Colonic mucosa (tissue), 4 donors: ENCODE measurements at regions of chr19 and their contacts with region 1.

Region 1: GRCh38 chr19:34336781-34337271 is 28.2 kb upstream of the GPI start:
- DNase-seq: no peak
- H3K4me3 ChIP-seq: no peak overlapping the region
- H3K27ac ChIP-seq: no peak overlapping the region
- H3K4me1 ChIP-seq: no peaks in the 10 kb centered on the region
- H3K27me3 ChIP-seq: no peaks in the 10 kb centered on the region
- CTCF ChIP-seq: peak; percentile 60

Region 2: GRCh38 chr19:34236035-34236987 is 100.5 kb before region 1 on chr19:
- intact Hi-C with region 1: loop called (anchors 5 kb)
- DNase-seq: peak; percentile 68
- H3K4me3 ChIP-seq: no peak overlapping the region
- H3K27ac ChIP-seq: peak overlapping the region; percentile 6
- H3K4me1 ChIP-seq: peaks cover 5% of the 10 kb centered on the region
- H3K27me3 ChIP-seq: no peaks in the 10 kb centered on the region
- CTCF ChIP-seq: no peak

Region 3: GRCh38 chr19:34416021-34416545 is 79.3 kb after region 1 on chr19:
- intact Hi-C with region 1: no loop called
- DNase-seq: no peak
- H3K4me3 ChIP-seq: no peak overlapping the region
- H3K27ac ChIP-seq: no peak overlapping the region
- H3K4me1 ChIP-seq: no peaks in the 10 kb centered on the region
- H3K27me3 ChIP-seq: no peaks in the 10 kb centered on the region
- CTCF ChIP-seq: no peak